ENCODE measurements at regions of chr3 and their contacts with region 1.

Region 1: DNA sequence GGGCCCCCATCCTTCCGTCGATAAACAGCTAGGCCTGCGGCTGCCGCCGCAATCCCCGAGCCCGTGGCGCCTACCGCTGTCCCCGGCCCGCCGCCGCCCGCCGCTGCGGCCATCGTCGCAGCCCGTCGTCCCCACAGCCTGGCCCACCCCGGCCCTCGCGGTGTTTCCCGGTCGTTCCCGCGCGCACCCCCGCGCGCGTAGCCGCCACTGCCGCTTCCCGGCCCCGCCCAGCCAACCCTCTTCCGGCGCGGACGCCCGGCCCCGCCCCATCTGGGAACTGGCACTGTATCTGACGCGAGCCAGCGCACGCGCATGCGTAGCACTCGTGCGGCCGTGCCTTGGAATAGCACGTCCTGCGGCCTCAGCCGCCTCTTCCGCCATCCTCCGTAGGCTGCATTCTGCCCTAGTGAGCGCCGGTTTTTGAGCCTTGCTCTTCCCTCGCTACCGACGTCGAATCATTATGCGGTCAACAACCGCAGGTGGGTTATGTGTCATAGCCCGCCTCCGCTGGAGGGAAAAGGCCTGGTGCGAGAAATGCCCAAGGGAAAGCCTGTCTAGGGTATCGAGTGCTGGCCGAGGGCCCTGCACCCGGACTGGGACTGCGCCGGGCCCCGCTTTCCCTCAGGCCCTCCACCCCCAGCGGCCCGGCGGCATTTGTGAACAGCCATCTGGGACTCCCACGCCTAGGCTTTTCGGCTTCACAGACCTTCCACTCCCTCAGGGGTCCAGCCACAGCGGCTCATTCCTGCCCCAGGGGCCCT is at the start of gene SMARCC1:
- DNase-seq: peak; percentile 100
- H3K4me3 ChIP-seq: peak within 1 kb of the TSS; percentile 75 to 99 (median 96)
- H3K27ac ChIP-seq: peak within 1 kb of the TSS; percentile 83 to 99 (median 96)
- H3K4me1 ChIP-seq: peaks cover 25 to 58% (median 43%) of the 10 kb centered on the region in 6 donors
- H3K27me3 ChIP-seq: no peaks in the 10 kb centered on the region
- CTCF ChIP-seq: peak in 8 of 11 experiments; percentile 27 to 65 (median 46)
- POLR2A ChIP-seq: peak; percentile 26 to 77 (median 68)
- total RNA-seq, gene SMARCC1: 40.4 to 82.9 (median 66.4) TPM

Region 2: GRCh38 chr3:47359323-47359722 is 422.5 kb before region 1 on chr3:
- intact Hi-C with region 1: no loop called
- DNase-seq: no peak
- H3K4me3 ChIP-seq: no peak overlapping the region
- H3K27ac ChIP-seq: no peak overlapping the region
- H3K4me1 ChIP-seq: peaks cover 0 to 18% (median 11%) of the 10 kb centered on the region in 6 donors
- H3K27me3 ChIP-seq: no peaks in the 10 kb centered on the region
- CTCF ChIP-seq: no peak
- POLR2A ChIP-seq: no peak

Region 3: DNA sequence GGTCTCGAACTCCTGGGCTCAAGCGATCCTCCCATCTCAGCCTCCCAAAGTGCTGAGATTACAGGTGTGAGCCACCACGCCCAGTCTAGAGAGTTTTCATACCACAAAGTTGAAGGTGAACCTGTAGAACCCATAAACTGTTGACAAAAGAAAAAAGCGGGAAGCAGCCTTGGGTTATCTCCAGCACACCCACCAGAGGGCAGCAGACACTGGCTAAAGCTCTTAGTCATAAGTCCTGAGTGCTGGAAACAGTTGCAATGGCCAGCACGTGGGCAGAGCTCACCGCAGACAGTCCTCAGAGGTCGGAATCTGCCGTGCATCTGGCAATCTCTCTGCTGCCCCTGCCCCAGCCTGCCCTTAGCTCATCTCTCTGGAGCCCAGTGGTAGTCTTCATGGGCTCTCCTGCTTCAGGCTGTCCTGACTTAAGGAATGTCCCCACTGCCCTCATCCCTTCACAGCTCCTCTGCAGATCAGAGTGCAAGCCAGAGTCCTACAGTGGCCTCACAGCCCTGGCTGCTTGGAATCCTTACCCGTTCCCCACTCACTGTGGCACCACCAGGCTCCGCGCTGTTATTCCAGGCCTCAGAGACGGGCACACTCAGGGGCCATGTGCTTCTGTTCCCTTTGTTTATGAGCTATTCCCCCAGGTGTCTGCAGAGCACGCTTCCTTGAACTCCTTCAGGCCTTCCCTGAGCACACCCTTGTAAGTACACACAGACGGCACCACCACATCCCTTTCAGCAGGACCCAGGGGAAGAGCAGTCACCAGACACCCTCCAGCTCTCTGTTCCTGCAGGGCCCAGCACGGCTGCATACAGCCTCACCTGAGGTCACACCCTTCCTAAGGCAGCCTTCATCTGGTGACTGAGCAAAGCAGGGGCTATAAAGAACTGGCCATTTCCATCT is 259.5 kb before region 1 on chr3:
- intact Hi-C with region 1: loop called (anchors 5 kb)
- DNase-seq: peak; percentile 90
- H3K4me3 ChIP-seq: no peak overlapping the region
- H3K27ac ChIP-seq: no peak overlapping the region
- H3K4me1 ChIP-seq: peaks cover 0 to 9% (median 5%) of the 10 kb centered on the region in 6 donors
- H3K27me3 ChIP-seq: no peaks in the 10 kb centered on the region
- CTCF ChIP-seq: peak; percentile 72 to 94 (median 88)
- POLR2A ChIP-seq: no peak